Tibial artery (tissue), 4 donors: ENCODE measurements at regions of chr20 and their contacts with region 1.

Region 1: GRCh38 chr20:58740054-58740936 is 47.7 kb downstream of the NPEPL1 start:
- DNase-seq: no peak
- H3K4me3 ChIP-seq: no peak overlapping the region
- H3K27ac ChIP-seq: no peak overlapping the region
- H3K4me1 ChIP-seq: no peaks in the 10 kb centered on the region
- H3K27me3 ChIP-seq: peaks cover 0 to 31% of the 10 kb centered on the region in 2 donors
- CTCF ChIP-seq: no peak

Region 2: DNA sequence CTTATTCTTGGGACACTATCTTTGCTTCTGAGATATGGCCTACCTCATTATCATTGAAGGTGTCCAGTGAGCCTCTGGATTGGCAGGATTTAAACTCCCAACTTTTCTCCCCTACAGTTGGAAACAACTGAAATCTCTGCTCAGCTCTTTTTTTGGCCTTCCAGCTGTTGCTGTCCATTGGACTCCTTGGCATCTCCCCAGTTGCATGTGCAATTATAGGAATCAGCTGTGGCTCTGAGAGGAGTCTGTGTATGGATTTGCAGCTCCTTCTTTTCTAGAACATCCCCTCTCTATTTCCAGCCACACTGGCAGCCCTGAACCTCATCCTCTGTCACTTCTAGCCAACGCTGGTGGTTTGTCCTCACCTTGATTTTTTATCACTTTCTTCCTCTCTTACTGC is 409.6 kb before region 1 on chr20:
- intact Hi-C with region 1: no loop called
- DNase-seq: no peak
- H3K4me3 ChIP-seq: no peak overlapping the region
- H3K27ac ChIP-seq: no peak overlapping the region
- H3K4me1 ChIP-seq: peaks cover 0 to 4% (median 1%) of the 10 kb centered on the region in 4 donors
- H3K27me3 ChIP-seq: no peaks in the 10 kb centered on the region
- CTCF ChIP-seq: no peak

Region 3: GRCh38 chr20:58650776-58651558 is 89.3 kb before region 1 on chr20 and contains the start of gene STX16:
- intact Hi-C with region 1: no loop called
- DNase-seq: peak; percentile 87 to 92
- H3K4me3 ChIP-seq: peak within 1 kb of the TSS; percentile 72 to 92
- H3K27ac ChIP-seq: peak within 1 kb of the TSS; percentile 88 to 91
- H3K4me1 ChIP-seq: peaks cover 0 to 66% (median 42%) of the 10 kb centered on the region in 4 donors
- H3K27me3 ChIP-seq: no peaks in the 10 kb centered on the region
- CTCF ChIP-seq: peak; percentile 49 to 68

Region 4: DNA sequence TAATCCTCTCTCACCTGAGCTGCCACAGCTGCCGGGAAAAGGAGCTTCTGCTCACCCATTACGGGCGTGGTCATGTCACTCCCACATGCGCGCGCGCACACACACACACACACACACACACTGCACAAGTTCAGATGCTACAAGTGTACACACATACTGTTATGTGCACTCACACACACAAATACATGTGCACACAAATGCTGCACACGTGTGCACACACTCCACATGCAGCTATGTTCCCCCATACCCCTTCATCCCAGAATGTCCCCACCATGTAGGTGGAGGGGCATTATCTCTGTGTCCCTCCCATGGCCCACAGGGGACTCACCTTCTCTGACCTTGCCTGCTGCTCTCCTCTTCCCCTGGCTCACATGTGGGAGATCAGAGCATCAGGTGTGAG is 73.1 kb after region 1 on chr20:
- intact Hi-C with region 1: loop called (anchors 2 kb)
- DNase-seq: no peak
- H3K4me3 ChIP-seq: no peak overlapping the region
- H3K27ac ChIP-seq: no peak overlapping the region
- H3K4me1 ChIP-seq: no peaks in the 10 kb centered on the region
- H3K27me3 ChIP-seq: peaks cover 0 to 32% of the 10 kb centered on the region in 2 donors
- CTCF ChIP-seq: no peak

Region 5: DNA sequence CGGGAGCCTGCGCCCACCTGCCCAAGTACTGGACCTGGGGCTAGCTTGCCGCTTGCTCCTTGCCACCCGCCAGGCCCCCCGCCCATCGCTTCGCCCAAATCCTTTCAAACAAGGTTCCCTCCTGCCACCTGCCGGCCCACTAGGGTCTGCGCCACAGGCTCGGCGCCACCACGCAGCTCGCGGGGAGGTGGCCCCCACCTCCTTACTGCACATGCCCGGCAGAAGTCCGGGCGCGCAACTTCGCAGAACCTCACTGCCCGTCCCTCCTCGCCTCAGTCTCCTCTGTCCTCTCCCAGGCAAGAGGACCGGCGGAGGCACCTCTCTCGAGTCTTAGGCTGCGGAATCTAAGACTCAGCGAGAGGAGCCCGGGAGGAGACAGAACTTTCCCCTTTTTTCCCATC is 99.2 kb after region 1 on chr20:
- intact Hi-C with region 1: no loop called
- DNase-seq: peak in 1 of 2 donors; percentile 54
- H3K4me3 ChIP-seq: no peak overlapping the region
- H3K27ac ChIP-seq: no peak overlapping the region
- H3K4me1 ChIP-seq: peaks cover 0 to 12% (median 5%) of the 10 kb centered on the region in 4 donors
- H3K27me3 ChIP-seq: peaks cover 0 to 58% of the 10 kb centered on the region in 2 donors
- CTCF ChIP-seq: peak; percentile 18 to 21